ACHN (cell line): ENCODE measurements at regions of chr1 and their contacts with region 1.

Region 1: DNA sequence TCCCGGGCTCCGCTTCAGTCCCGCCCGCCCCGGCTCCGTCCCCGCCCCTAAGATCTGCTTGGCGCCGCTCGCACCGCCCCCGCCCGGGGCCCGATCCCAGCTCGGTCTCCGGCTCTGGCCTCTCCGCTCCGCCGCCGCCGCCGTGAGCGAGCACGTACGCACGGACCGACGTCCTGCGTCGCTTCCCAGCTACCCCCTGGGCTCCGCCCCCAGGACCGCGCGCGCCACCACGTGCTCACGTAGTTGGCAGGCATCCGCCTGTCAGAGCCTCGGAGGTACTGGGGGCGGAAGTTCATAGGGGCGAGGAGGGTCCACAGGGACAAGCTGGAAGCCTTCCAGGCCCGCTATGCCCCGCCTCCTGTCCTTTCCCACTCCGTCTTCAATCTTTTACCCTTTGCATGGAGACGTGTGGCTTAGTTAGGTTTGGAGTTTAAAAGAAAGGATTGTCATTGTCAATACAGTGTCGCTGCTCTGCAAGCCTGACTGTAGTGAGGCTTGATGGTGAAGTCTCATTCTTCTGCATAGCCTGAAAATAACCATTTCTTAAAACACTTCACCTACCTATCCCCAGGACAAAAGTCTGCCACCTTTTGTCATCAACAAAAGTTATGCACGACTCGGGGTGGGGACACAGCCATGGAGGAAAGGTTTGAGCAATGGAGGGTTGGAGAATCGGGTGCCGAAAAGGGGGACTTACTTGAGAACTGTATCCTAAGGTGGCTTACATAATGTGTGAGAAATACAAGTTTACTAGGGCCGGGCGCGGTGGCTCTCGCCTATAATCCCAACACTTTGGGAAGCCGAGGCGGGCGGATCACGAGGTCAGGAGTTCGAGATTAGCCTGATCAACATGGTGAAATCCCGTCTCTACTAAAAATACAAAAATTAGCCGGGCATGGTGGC is at the start of gene CLK2:
- DNase-seq: peak; percentile 94

Region 2: DNA sequence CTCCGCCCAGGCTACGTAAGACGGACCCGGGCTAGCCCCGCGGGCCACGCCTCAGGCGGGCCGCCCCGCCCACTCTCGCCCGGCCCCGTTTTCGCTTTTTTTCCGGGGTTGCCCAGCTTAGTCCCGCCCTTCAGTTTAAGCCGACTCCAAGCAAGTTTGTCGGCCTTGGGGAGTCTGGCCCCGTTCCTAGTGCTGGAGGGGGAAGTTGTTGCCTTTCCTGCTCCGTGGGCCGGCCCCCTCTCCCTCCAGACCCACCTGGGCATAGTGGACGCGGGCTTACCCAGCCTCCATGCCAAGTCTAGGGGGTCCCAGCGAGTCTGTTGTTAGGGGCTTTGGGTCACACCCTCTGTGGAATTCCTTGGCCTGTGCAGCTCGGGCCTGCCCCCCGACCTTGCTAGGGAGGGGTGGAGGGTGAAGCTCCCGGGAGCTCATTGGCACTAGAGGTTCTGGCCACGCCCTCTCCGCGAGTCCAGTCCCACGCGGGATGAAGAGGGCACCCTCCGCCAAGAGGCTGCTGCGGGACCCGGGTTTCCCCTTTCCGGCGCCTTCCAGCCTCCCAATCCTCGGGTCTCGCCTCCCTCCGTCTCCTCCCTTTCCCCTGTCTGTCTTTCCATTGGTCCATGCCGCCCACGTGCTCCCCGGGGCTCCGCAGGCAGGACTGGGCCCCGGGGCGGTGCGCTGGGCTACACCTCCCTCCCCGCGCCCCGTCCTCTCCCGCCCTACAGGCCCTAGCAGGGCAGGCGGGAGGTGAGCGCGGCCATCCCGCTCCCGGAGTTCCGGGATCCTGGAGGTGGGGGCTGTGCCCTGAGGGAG is 50.4 kb after region 1 on chr1:
- in situ Hi-C with region 1: loop called (anchors 5 kb)
- DNase-seq: peak; percentile 98

Region 3: DNA sequence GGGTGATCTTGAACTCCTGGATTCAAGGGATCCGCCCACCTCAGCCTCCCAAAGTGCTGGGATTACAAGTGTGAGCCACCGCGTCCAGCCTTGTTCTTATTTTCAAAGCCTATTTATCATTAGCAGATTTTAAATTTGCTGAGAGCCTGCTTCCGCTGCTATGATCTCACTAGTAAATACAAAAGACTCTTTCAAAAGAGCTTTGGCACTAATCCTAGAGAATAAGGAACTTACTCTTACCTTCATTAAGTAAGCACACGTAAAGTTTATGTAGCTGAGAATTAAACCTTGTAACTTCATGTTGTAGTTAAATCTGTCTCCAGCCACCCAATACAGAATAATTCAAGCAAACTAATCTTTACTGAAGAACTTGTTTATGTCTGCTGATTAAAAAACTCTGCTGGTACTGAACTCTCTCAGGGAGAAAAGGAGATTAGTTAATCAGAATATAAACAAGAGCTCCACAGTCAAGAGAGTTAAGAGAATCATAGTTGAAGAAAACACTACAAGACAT is 119.4 kb after region 1 on chr1:
- in situ Hi-C with region 1: no loop called
- DNase-seq: no peak